Mammary epithelial cell (primary cell): ENCODE measurements at regions of chr6 and their contacts with region 1.

Region 1: GRCh38 chr6:43910638-43911353 is 140.8 kb downstream of the VEGFA start:
- DNase-seq: peak; percentile 32
- H3K4me3 ChIP-seq: no peak overlapping the region
- H3K27ac ChIP-seq: no peak overlapping the region
- H3K4me1 ChIP-seq: no peaks in the 10 kb centered on the region
- H3K27me3 ChIP-seq: no peaks in the 10 kb centered on the region
- CTCF ChIP-seq: no peak

Region 2: DNA sequence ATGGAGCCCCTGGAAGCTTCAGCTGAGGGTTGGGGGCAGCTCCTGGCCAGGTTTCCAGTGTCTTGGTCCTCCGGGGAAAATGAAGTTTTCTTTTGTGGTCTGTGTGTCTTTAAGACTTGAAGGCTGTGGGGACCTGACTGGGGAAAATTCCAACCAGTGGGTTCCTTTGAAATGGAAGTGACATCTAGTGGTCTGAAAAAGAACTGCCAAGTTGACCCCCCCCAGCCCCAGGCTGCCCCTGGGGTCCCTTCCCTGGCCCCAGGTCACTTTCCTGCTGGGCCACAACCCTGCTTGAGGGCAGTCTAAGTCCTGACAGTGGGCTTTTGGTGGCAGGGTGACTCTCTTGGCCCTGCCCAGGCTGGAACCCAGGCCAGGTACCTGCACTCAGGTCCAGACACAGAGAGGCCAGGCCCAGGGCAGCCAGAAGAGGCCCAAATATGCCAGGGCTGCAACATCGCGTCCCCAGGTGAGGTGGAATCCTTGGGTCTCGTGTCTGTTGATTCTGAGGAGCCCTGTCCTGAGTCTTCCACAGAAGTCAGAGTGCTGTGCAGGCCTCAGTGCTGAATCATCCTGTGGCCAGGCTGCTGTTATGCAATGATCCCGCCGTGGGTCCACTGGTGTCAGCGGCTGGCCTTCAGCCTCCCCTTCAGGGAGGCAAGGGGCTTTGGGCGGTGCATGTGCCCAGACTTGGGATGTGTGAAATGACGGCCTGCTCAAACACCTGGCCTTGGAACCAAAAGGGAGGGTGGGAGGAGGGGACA is 72.3 kb before region 1 on chr6:
- CTCF ChIA-PET with region 1: interaction called, 16 read pairs
- dilution Hi-C with region 1: loop called (anchors 5 kb)
- in situ Hi-C with region 1: no loop called
- intact Hi-C with region 1: no loop called
- DNase-seq: peak; percentile 20
- H3K4me3 ChIP-seq: no peak overlapping the region
- H3K27ac ChIP-seq: no peak overlapping the region
- H3K4me1 ChIP-seq: peaks cover 9% of the 10 kb centered on the region
- H3K27me3 ChIP-seq: no peaks in the 10 kb centered on the region
- CTCF ChIP-seq: peak; percentile 33 to 59

Region 3: GRCh38 chr6:43874267-43874666 is 36.5 kb before region 1 on chr6:
- CTCF ChIA-PET with region 1: no interaction called
- dilution Hi-C with region 1: no loop called
- in situ Hi-C with region 1: no loop called
- intact Hi-C with region 1: no loop called
- DNase-seq: no peak
- H3K4me3 ChIP-seq: no peak overlapping the region
- H3K27ac ChIP-seq: no peak overlapping the region
- H3K4me1 ChIP-seq: no peaks in the 10 kb centered on the region
- H3K27me3 ChIP-seq: no peaks in the 10 kb centered on the region
- CTCF ChIP-seq: no peak

Region 4: GRCh38 chr6:43926634-43927524 is 16.1 kb after region 1 on chr6:
- CTCF ChIA-PET with region 1: no interaction called
- dilution Hi-C with region 1: no loop called
- in situ Hi-C with region 1: no loop called
- intact Hi-C with region 1: loop called (anchors 1 kb)
- DNase-seq: peak; percentile 93
- H3K4me3 ChIP-seq: no peak overlapping the region
- H3K27ac ChIP-seq: peak overlapping the region; percentile 69
- H3K4me1 ChIP-seq: peaks cover 45% of the 10 kb centered on the region
- H3K27me3 ChIP-seq: no peaks in the 10 kb centered on the region
- CTCF ChIP-seq: peak; percentile 8 to 54

Region 5: DNA sequence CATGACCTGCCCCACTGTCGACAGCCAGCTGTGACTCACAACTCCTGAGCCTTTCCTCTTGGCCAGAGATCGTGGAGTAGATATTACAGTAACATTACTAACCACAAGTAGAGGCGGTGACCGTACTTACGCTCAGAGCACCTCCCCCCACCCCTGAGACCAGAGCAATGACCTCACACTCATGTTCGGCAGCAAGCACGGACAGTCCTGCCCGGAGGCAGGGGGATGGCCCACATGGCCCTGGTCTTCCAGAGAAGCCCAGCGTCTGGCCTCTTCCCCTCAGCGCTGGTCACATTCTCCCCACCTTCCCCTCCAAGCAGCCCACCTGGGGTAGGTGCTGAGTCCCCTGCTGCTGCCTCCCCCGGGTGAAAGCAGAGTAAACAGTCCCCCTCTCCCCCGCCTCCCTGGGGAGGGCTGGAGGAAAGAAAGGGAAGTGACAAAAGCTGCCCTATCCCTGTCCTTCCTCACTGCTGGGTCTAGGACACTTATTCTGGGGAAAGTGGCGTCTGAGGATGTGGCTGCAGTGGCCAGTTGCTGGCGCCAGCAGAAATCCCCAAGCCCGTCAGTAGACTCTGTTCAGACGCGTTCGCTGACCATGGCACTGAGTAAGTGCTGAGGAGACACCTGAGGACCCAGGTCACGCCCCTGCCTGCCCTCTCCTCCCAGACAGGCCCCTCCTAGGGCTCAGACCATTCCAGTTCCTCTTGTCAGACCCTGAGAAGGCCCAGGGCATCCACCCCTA is 148.0 kb after region 1 on chr6:
- CTCF ChIA-PET with region 1: no interaction called
- dilution Hi-C with region 1: no loop called
- in situ Hi-C with region 1: no loop called
- intact Hi-C with region 1: loop called (anchors 2 kb)
- DNase-seq: peak; percentile 99
- H3K4me3 ChIP-seq: no peak overlapping the region
- H3K27ac ChIP-seq: peak overlapping the region; percentile 95
- H3K4me1 ChIP-seq: peaks cover 89% of the 10 kb centered on the region
- H3K27me3 ChIP-seq: no peaks in the 10 kb centered on the region
- CTCF ChIP-seq: no peak

Region 6: DNA sequence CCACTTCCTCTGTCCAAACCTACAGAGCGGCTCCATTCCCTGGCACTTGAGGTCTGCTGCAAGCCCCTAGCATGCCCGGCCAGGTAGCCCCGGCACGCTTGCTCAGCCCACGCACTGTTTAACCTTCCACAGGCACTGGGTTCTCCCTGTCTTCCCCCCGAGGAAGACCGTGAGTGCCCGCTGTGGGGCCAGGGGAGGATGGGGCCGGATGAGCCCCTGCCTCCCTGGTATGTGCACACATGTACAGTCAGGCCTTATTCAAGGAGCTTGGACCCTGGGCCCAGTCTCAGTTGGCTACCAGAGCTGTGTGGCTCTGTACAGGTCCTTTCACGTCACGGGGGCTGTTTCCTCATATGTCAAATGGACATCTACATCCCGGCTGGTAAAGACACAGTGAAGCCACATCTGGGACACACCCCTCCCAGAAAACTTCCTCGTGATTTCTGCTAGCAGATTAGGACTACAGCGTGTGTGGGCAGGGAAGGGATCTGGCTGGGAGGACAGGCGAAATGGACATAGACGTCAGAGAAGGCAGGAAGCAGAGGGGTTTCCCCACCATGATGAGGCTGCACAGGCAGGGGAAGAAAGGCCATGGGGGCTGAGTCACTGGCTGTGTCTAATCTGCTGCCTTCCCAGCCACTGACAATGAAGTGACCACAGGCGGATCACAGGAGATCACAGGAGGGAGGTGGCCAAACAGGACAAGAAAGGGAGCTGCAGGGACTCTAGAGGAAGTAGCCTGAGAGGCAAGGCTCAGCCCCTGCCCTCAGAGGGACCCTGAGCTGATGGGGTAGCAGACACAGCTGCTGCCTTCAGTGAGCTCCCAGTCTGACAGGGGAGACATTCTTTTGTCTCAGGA is 153.5 kb after region 1 on chr6:
- CTCF ChIA-PET with region 1: no interaction called
- dilution Hi-C with region 1: no loop called
- in situ Hi-C with region 1: no loop called
- intact Hi-C with region 1: loop called (anchors 1 kb)
- DNase-seq: peak; percentile 99
- H3K4me3 ChIP-seq: no peak overlapping the region
- H3K27ac ChIP-seq: peak overlapping the region; percentile 85
- H3K4me1 ChIP-seq: peaks cover 73% of the 10 kb centered on the region
- H3K27me3 ChIP-seq: no peaks in the 10 kb centered on the region
- CTCF ChIP-seq: no peak

Region 7: GRCh38 chr6:44074439-44075136 is 163.8 kb after region 1 on chr6:
- CTCF ChIA-PET with region 1: no interaction called
- dilution Hi-C with region 1: no loop called
- in situ Hi-C with region 1: no loop called
- intact Hi-C with region 1: no loop called
- DNase-seq: peak; percentile 83
- H3K4me3 ChIP-seq: no peak overlapping the region
- H3K27ac ChIP-seq: peak overlapping the region; percentile 27
- H3K4me1 ChIP-seq: peaks cover 61% of the 10 kb centered on the region
- H3K27me3 ChIP-seq: no peaks in the 10 kb centered on the region
- CTCF ChIP-seq: peak; percentile 92